Dorsolateral prefrontal cortex (tissue), 120 donors: ENCODE measurements at regions of chr11 and their contacts with region 1.

Region 1: DNA sequence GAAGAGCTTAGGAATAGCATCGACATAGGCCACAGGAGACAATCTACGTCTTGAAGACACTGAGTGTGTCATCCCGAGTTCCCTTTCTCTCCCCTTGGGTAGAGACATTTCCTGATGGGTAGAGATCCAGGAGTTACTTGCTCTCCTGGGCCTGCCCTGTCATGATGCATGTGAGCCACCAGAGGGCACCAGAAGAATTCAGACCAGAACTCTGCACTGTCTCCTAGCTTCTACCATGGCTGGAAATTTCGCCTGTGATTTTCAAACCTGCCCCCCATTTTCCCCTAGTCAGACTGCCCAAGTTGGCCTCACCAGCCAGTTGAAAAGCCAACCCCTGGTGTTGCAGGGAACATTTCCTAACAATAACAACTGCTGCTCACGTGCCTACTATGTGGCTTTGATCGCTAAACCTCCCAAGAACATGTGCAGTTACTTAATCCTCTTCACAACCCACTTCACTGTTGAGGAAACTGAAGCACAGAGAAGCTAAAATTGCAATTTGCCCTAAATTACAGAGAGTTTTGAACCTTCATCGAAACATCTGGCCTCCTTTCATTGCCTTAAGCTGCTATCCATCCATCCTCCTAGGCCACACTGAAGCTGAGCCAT is 47.2 kb downstream of the C11orf58 start:
- DNase-seq: peak; percentile 46 to 80 (median 71)
- H3K4me3 ChIP-seq: no peak overlapping the region
- H3K27ac ChIP-seq: no peak overlapping the region
- H3K27me3 ChIP-seq: no peaks in the 10 kb centered on the region
- CTCF ChIP-seq: peak; percentile 62 to 98 (median 91)

Region 2: DNA sequence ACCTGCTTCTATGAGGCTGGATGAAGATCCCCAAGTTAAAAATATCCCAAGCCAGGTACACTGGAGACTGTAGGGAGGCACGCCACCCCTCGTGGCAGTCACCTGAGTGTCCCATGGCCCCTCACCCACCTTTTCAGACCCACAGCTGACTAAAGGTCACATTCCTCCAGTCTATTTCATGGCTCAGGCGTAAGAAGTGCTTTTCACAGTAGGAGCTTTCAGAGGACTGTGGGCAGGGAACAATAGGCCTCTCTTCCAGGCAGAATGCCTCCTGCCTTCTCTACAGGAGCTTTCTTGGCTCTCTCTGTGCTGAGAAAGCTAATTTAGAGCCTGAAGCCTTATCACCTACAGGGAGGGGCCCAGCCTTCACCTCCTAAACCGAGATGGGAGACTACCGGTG is 26.6 kb after region 1 on chr11:
- intact Hi-C with region 1: loop called in 1 of 2 experiments (anchors 2 kb)
- DNase-seq: no peak
- H3K4me3 ChIP-seq: no peak overlapping the region
- H3K27ac ChIP-seq: peak overlapping the region in 4 of 59 donors; percentile 9 to 59 (median 16)
- H3K27me3 ChIP-seq: no peaks in the 10 kb centered on the region
- CTCF ChIP-seq: no peak

Region 3: GRCh38 chr11:16825968-16826367 is 40.3 kb after region 1 on chr11:
- intact Hi-C with region 1: no loop called
- DNase-seq: peak in 1 of 10 donors; percentile 52
- H3K4me3 ChIP-seq: no peak overlapping the region
- H3K27ac ChIP-seq: no peak overlapping the region
- H3K27me3 ChIP-seq: no peaks in the 10 kb centered on the region
- CTCF ChIP-seq: no peak

Region 4: DNA sequence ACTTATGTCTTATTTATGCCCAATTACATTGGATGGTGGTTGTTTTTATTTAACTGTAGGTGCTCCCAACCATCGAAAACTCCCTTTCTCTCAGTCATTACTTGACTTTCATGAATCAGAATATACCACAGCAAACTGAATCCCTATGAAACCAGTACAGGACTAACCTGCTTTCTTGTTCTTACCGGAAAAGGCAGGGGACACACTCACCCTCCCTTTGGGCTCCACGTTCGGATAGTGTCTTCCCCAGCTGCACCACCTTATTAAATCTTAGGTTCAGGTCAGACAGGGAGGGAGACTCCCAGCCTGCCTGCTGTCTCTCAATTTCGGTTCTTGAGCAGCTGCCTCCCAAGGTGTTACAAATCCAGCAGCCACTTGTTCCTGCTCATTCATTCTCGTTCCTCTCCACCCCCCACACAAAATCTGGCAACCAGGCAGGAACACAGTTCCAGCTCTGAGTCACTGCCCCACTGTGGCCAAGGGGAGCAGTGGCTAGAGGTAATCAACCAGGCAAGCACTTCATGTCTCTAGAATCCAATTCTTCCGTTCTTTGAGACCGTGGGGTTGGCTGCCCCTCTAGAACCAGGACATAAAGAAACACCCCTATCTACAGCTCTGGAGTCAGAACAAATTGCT is 95.6 kb after region 1 on chr11:
- intact Hi-C with region 1: loop called in 1 of 2 experiments (anchors 1 kb)
- DNase-seq: peak in 5 of 10 donors; percentile 17 to 49 (median 31)
- H3K4me3 ChIP-seq: no peak overlapping the region
- H3K27ac ChIP-seq: no peak overlapping the region
- H3K27me3 ChIP-seq: peaks cover 0 to 9% (median 0%) of the 10 kb centered on the region in 45 donors
- CTCF ChIP-seq: peak in 24 of 56 donors; percentile 7 to 40 (median 18)

Region 5: GRCh38 chr11:16945671-16946469 is 160.2 kb after region 1 on chr11:
- intact Hi-C with region 1: loop called in 1 of 2 experiments (anchors 5 kb)
- DNase-seq: peak in 9 of 10 donors; percentile 7 to 79 (median 60)
- H3K4me3 ChIP-seq: no peak overlapping the region
- H3K27ac ChIP-seq: peak overlapping the region in 4 of 59 donors; percentile 15 to 61 (median 56)
- H3K27me3 ChIP-seq: no peaks in the 10 kb centered on the region
- CTCF ChIP-seq: peak in 54 of 56 donors; percentile 25 to 87 (median 70)

Region 6: DNA sequence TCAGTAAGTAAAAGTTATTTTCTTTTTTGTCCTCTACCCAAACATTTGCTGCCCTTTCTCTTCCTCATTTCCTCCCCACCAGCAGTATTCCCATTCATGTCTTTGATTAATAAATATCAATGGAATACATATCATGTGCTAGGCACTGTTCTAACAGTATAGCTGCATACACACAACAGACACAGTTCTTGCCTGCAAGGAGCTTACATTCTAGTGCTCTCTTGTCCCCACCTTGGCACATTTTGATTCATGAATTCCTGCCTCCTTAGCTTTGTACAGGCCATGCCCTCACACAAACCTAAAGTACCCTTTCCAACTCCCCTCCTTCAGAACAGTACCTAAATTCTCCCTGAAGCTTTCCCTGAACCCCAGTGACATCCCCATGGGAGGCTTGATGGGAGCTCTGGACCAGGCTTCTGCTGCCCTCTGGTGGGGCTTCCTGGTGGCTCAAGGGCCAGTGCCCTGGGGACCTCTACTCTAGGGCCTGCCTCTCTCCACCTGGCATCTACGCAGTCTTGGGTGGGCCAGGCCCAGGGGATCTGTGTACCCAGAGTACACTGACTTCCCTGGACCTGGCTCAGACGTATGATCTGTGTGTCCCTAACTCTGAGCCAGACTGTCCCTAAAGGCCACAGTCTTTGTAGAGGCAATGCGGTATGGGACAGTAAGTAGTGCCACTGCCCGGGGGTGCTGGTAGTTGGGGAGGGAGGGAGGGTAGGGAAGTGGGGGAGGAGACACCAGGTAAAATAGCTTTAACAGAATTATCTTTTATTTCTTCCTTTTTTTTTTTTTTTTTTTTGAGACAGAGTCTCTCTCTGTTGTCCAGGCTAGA is 277.8 kb after region 1 on chr11:
- intact Hi-C with region 1: loop called in 1 of 2 experiments (anchors 5 kb)
- DNase-seq: peak in 9 of 10 donors; percentile 20 to 79 (median 61)
- H3K4me3 ChIP-seq: no peak overlapping the region
- H3K27ac ChIP-seq: no peak overlapping the region
- H3K27me3 ChIP-seq: no peaks in the 10 kb centered on the region
- CTCF ChIP-seq: peak; percentile 33 to 91 (median 79)

Region 7: DNA sequence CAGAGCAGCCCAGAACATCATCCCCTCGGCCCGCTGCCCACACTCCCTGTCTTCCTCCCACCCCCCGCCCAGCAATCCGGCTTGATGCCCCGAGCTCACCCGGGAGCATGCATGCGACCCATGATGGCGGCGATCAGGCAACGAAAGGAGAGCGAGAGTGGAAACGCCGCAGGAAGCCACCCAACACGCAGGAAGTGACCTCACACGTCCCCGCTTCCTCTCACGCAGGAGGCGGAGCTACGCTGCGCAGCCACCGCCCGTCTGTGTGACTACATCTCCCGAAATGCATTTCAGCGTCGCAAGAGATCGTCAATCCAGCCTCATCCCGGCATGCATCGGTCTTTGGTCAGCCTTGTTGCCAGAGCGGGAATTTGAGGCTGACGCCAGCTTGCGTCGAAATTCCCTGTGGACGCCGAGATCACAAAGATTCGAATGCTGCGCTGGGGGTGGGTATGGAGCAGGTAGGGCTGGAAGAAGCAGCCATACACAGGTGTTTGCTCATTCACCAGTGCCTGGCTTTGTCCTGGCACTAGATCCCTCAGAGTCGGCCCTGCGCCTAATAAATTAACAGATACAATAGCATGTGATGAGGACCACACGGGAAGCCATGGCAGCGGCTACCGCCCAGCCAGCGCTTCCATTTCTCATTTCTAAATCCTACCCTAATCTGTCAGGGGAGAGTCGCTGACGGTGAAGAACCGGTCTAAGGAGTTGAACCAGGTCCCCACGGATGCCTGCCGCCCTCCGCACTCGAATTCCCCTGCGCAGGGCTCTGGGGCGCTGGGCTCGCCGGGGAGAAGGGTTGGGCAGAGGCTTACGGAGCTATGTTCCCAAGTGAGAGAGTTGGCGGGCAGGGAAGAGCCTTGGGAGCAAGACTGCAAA is 292.1 kb after region 1 on chr11 and contains the start of gene RPS13:
- intact Hi-C with region 1: loop called in 1 of 2 experiments (anchors 10 kb)
- DNase-seq: peak; percentile 98 to 99 (median 99)
- H3K4me3 ChIP-seq: peak within 1 kb of the TSS; percentile 58 to 100 (median 96)
- H3K27ac ChIP-seq: peak within 1 kb of the TSS; percentile 42 to 96 (median 90)
- H3K27me3 ChIP-seq: no peaks in the 10 kb centered on the region
- CTCF ChIP-seq: peak in 27 of 56 donors; percentile 3 to 55 (median 23)
- total RNA-seq, gene RPS13: 204 to 383 (median 281) TPM